ENCODE measurements at regions of chr10 and their contacts with region 1.

Region 1: GRCh38 chr10:117216611-117217195 is 19.4 kb downstream of the KCNK18 start:
- DNase-seq: no peak
- H3K4me3 ChIP-seq: peak overlapping the region; percentile 67
- CTCF ChIP-seq: peak; percentile 100

Region 2: GRCh38 chr10:117204316-117204715 is 12.4 kb before region 1 on chr10:
- CTCF ChIA-PET with region 1: interaction called, 19 read pairs
- POLR2A ChIA-PET with region 1: no interaction called
- DNase-seq: no peak
- H3K4me3 ChIP-seq: no peak overlapping the region
- CTCF ChIP-seq: no peak

Region 3: GRCh38 chr10:117249493-117250093 is 32.9 kb after region 1 on chr10:
- CTCF ChIA-PET with region 1: interaction called, 28 read pairs
- POLR2A ChIA-PET with region 1: no interaction called
- DNase-seq: no peak
- H3K4me3 ChIP-seq: no peak overlapping the region
- CTCF ChIP-seq: no peak

Region 4: DNA sequence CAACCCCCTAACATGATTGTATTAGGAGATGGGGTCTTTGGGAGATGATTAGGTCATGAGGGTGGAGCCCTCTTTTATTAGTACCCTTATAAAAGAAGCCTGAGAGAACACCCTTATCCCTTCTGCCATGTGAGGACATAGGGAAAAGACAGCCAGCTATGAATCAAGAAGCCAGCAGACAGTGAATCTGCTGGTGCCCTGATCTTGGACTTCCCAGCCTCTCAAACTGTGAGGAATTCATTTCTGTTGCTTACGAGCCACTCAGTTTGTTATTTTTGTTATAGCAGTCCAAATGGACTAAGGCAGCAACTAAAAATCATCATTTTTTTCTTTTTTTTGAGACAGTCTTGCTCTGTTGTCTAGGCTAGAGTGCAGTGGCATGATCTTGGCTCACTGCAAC is 84.0 kb after region 1 on chr10:
- CTCF ChIA-PET with region 1: interaction called, 10 read pairs
- POLR2A ChIA-PET with region 1: no interaction called
- DNase-seq: no peak
- H3K4me3 ChIP-seq: no peak overlapping the region
- CTCF ChIP-seq: no peak

Region 5: DNA sequence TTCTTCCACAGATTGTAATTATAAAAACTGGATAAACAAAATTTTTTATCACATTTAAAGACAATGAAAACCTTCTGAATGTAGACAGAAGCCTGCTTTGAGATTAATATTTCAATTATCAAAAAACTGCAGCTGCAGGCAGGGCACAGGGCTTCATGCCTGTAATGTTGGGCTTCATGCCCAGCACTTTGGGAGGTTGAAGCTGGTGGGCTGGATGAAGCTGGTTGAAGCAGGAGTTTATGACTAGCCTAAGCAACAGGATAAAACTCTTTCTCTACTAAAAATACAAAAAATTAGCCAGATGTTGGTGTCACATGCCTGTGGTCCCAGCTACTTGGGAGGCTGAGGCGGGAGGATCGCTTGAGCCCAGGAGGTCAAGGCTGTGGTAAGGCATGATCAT is 117.4 kb after region 1 on chr10:
- CTCF ChIA-PET with region 1: interaction called, 11 read pairs
- POLR2A ChIA-PET with region 1: no interaction called
- DNase-seq: no peak
- H3K4me3 ChIP-seq: no peak overlapping the region
- CTCF ChIP-seq: no peak

Region 6: GRCh38 chr10:118459726-118460193 is 1243.1 kb after region 1 on chr10:
- CTCF ChIA-PET with region 1: interaction called, 10 read pairs
- POLR2A ChIA-PET with region 1: no interaction called
- DNase-seq: peak; percentile 4
- H3K4me3 ChIP-seq: no peak overlapping the region
- CTCF ChIP-seq: peak; percentile 72